ENCODE measurements at regions of chr1 and their contacts with region 1.

Region 1: DNA sequence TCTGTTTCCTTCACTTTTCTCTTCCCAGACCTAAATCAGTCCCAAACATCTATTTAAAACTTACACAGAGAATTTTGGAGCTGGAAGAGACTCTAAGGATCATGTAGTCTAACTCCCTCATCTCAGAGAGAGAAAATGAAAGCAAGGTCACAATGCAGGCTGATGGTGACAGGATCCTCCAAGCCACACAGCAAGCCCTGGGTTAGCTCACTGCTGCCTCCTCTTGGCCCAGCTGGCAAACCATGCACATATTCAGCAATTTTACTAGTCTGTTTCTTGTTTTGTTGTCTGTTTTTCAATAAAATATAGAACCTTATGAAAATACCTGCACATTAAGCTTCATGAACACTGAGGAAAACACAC is 27.7 kb upstream of the LY9 start:
- DNase-seq: peak; percentile 94
- ATAC-seq: peak; percentile 80
- H3K4me3 Mint-ChIP-seq: peak overlapping the region; percentile 78
- H3K27ac Mint-ChIP-seq: peak overlapping the region; percentile 92
- H3K4me1 Mint-ChIP-seq: peaks cover 51% of the 10 kb centered on the region
- H3K27me3 Mint-ChIP-seq: no peaks in the 10 kb centered on the region
- CTCF ChIP-seq: peak; percentile 89

Region 2: GRCh38 chr1:160416369-160416768 is 351.9 kb before region 1 on chr1:
- CTCF ChIA-PET with region 1: no interaction called
- POLR2A ChIA-PET with region 1: no interaction called
- intact Hi-C with region 1: no loop called
- DNase-seq: no peak
- ATAC-seq: peak; percentile 51
- H3K4me3 Mint-ChIP-seq: no peak overlapping the region
- H3K27ac Mint-ChIP-seq: no peak overlapping the region
- H3K4me1 Mint-ChIP-seq: no peaks in the 10 kb centered on the region
- H3K27me3 Mint-ChIP-seq: no peaks in the 10 kb centered on the region
- CTCF ChIP-seq: no peak

Region 3: GRCh38 chr1:160711602-160712311 is 56.5 kb before region 1 on chr1 and contains the start of gene CD48:
- CTCF ChIA-PET with region 1: interaction called, 46 read pairs
- POLR2A ChIA-PET with region 1: interaction called, 8 read pairs
- intact Hi-C with region 1: no loop called
- DNase-seq: peak; percentile 75
- ATAC-seq: peak; percentile 37
- H3K4me3 Mint-ChIP-seq: no peak within 1 kb of the TSS
- H3K27ac Mint-ChIP-seq: no peak within 1 kb of the TSS
- H3K4me1 Mint-ChIP-seq: peaks cover 37% of the 10 kb centered on the region
- H3K27me3 Mint-ChIP-seq: no peaks in the 10 kb centered on the region
- CTCF ChIP-seq: no peak
- total RNA-seq, gene CD48: 379 to 388 TPM

Region 4: GRCh38 chr1:160731990-160732389 is 36.3 kb before region 1 on chr1:
- CTCF ChIA-PET with region 1: interaction called, 217 read pairs
- POLR2A ChIA-PET with region 1: interaction called, 13 read pairs
- intact Hi-C with region 1: no loop called
- DNase-seq: no peak
- ATAC-seq: no peak
- H3K4me3 Mint-ChIP-seq: no peak overlapping the region
- H3K27ac Mint-ChIP-seq: peak overlapping the region; percentile 13
- H3K4me1 Mint-ChIP-seq: peaks cover 45% of the 10 kb centered on the region
- H3K27me3 Mint-ChIP-seq: no peaks in the 10 kb centered on the region
- CTCF ChIP-seq: no peak

Region 5: DNA sequence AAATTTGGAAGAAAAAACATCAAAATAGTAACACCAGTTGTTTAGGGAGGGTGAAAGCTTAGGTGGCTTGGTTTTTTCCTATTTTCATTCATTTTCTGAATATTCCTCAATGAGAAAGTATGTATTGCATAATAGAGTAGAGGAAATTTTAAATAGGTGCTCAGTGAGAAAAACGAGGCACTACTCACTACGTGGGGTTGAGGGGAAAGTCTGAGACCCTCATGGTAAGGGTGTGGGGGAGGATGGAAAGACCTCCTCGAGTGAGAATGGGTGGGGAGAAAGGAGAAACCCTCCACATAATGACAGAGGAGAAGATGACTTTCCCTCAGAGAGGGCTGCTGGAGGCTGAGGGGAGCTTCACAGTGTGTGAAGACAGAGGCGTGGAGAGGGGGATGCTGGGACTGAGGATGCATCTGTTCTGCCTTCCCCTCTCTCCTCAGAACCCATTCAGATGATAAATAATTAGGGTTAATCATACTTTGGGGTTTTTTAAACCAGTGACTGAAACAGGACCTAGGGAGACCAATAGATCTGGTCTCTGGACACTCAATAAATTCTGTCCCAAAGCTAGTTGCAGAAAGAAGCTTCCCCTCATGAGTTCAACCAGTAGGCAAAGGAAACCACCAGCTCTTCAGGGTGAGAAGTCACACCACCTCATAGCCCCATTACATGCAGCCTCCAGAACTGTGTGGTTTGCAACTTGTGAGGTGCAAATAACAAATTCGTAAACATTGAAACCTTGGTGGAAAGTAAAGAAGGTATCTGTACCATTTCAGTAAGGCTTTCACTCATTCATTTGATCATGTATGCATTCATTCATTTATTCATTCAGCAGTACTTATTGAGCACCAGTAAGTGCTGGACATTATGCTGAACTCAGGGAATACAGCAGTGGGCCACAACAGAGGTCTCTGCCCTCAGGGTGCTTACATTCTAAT is 12.1 kb before region 1 on chr1:
- CTCF ChIA-PET with region 1: interaction called, 31 read pairs
- POLR2A ChIA-PET with region 1: interaction called, 17 read pairs
- intact Hi-C with region 1: no loop called
- DNase-seq: peak; percentile 70
- ATAC-seq: peak; percentile 68
- H3K4me3 Mint-ChIP-seq: peak overlapping the region; percentile 40
- H3K27ac Mint-ChIP-seq: peak overlapping the region; percentile 95
- H3K4me1 Mint-ChIP-seq: peaks cover 73% of the 10 kb centered on the region
- H3K27me3 Mint-ChIP-seq: no peaks in the 10 kb centered on the region
- CTCF ChIP-seq: no peak

Region 6: DNA sequence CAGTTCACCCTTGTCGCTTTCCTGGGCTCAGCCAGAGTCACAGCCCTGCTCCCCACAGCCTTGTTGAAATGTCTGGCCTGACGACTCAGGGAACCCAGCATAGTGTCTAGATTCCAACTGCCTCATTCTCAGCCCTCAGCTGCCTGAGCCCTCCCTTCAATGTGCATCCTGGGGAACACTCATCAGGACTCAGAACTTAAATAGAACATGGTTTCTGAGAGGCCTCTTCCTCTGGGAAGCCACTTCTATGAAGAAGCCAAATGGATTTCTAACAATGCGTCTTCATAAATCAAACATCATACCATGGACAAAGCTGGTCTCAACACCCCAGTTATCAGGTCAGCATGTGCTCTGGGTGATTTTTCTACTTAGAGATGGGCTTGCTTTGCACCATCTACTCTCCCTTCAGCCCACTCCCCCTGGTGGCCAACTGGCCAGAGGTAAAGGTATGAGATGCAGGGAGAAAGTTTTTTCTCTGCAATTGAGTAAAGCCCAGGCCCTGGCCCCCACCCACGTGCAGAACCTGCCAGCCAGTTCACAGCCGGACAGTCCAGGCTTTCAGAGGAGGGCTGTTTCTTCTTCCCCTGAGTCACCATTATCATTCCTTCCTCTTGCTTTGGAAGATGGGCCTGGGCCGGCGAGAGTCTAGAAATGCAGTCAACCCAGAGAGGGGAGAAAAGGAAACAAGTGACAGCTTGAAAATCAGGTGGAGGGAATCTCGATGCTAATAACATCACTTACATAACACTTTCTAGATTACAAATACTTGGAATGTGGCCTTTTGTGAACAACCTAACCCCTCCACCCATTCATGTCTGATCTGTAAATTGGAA is 62.3 kb after region 1 on chr1:
- CTCF ChIA-PET with region 1: interaction called, 48 read pairs
- POLR2A ChIA-PET with region 1: no interaction called
- intact Hi-C with region 1: no loop called
- DNase-seq: peak; percentile 89
- ATAC-seq: peak; percentile 84
- H3K4me3 Mint-ChIP-seq: no peak overlapping the region
- H3K27ac Mint-ChIP-seq: peak overlapping the region; percentile 62
- H3K4me1 Mint-ChIP-seq: peaks cover 34% of the 10 kb centered on the region
- H3K27me3 Mint-ChIP-seq: no peaks in the 10 kb centered on the region
- CTCF ChIP-seq: peak; percentile 68

Measured in activated CD8-positive, alpha-beta T cell treated with anti-CD3 and anti-CD28 coated beads for 36 hours (primary cell).